ENCODE measurements at regions of chr6 and their contacts with region 1.

Region 1: GRCh38 chr6:34526992-34527728 is 29.0 kb downstream of the SPDEF start:
- DNase-seq: peak; percentile 97
- ATAC-seq: peak; percentile 94 to 99 (median 96)
- H3K4me3 ChIP-seq: peak overlapping the region in 2 of 3 donors; percentile 21 to 22
- H3K27ac ChIP-seq: no peak overlapping the region
- H3K4me1 ChIP-seq: peaks cover 0 to 9% (median 0%) of the 10 kb centered on the region in 4 donors
- H3K27me3 ChIP-seq: no peaks in the 10 kb centered on the region
- CTCF ChIP-seq: peak; percentile 75 to 89 (median 83)
- POLR2A ChIP-seq: no peak

Region 2: GRCh38 chr6:34196126-34196830 is 330.9 kb before region 1 on chr6:
- intact Hi-C with region 1: no loop called
- DNase-seq: peak; percentile 87 to 90 (median 90)
- ATAC-seq: peak; percentile 99 to 100 (median 100)
- H3K4me3 ChIP-seq: peak overlapping the region; percentile 34 to 57 (median 44)
- H3K27ac ChIP-seq: no peak overlapping the region
- H3K4me1 ChIP-seq: no peaks in the 10 kb centered on the region
- H3K27me3 ChIP-seq: no peaks in the 10 kb centered on the region
- CTCF ChIP-seq: peak; percentile 97 to 100 (median 99)
- POLR2A ChIP-seq: no peak

Region 3: DNA sequence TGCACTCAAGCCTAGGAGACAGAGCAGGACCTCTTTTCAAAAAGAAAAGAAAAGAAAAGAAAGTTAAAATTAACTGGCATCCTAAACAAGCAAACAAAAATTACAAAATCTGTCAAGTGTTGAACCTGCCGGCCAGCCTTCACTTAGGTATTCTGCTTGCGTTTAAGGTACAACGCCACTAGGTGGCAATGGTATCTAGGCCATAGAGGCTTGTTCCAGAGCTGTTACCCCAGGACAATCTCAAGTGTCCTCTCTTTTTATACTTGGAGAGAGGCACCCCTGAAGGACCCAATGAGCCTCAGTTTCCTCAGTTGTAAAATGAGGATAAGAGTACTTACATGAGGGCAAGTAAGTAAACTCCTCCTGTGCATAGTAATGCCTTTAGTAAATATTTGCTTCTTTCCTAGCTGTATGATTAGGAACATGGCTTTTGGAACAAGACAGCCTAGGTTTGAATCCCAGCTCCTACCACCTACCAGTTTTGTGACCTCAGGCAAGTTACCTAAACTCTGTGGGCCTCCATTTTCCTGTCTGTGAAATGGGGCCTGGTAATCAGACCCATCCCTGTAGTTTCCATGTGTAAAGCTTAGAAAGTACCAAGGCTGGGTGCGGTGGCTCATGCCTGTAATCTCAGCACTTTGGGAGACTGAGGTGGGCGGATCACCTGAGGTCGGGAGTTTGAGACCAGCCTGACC is 67.1 kb before region 1 on chr6:
- intact Hi-C with region 1: loop called in 1 of 2 experiments (anchors 10 kb)
- DNase-seq: peak in 1 of 3 donors; percentile 62
- ATAC-seq: peak; percentile 81 to 92 (median 86)
- H3K4me3 ChIP-seq: no peak overlapping the region
- H3K27ac ChIP-seq: no peak overlapping the region
- H3K4me1 ChIP-seq: no peaks in the 10 kb centered on the region
- H3K27me3 ChIP-seq: no peaks in the 10 kb centered on the region
- CTCF ChIP-seq: peak; percentile 65 to 83 (median 78)
- POLR2A ChIP-seq: no peak

Region 4: DNA sequence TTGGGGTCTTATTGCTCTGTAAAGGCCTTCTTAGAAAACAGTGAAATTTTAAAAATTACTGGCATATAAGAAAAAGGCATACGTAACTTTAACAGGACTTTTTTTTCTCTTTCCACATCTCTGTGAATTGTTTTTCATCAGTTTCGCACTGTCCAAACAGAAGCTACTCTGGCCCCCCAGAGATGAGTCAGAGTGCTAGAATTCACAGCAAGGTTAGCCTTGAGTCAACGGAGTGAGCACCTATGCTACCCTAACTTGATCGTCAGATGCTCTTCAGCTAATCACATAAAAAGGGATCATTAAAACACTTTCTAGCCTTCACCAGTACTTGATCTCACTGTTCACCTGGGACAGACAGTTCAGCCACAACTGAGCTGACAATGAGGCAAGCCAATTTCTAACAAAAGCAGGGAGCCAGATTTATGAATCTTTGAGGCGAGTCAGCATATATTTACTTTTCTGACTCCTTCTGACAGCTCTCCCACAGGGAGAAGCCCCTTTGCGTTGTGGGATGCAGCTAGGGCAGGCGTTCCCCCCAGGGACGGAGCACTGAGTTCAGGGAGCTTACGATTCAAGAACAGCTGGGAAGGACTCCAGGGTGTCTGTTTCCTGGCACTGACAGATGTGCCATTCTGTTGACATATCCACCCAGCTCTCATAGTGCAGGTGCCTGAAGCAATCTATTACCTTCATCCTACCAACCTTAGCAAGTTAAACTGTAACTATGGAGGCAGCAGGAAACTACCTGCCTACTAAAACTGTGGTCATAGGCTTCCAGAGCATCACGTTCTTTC is 75.4 kb after region 1 on chr6:
- intact Hi-C with region 1: loop called (anchors 5 kb)
- DNase-seq: peak; percentile 50 to 87 (median 69)
- ATAC-seq: peak; percentile 90 to 96 (median 95)
- H3K4me3 ChIP-seq: no peak overlapping the region
- H3K27ac ChIP-seq: peak overlapping the region; percentile 16 to 51 (median 29)
- H3K4me1 ChIP-seq: peaks cover 0 to 44% (median 22%) of the 10 kb centered on the region in 4 donors
- H3K27me3 ChIP-seq: no peaks in the 10 kb centered on the region
- CTCF ChIP-seq: no peak
- POLR2A ChIP-seq: no peak

Region 5: DNA sequence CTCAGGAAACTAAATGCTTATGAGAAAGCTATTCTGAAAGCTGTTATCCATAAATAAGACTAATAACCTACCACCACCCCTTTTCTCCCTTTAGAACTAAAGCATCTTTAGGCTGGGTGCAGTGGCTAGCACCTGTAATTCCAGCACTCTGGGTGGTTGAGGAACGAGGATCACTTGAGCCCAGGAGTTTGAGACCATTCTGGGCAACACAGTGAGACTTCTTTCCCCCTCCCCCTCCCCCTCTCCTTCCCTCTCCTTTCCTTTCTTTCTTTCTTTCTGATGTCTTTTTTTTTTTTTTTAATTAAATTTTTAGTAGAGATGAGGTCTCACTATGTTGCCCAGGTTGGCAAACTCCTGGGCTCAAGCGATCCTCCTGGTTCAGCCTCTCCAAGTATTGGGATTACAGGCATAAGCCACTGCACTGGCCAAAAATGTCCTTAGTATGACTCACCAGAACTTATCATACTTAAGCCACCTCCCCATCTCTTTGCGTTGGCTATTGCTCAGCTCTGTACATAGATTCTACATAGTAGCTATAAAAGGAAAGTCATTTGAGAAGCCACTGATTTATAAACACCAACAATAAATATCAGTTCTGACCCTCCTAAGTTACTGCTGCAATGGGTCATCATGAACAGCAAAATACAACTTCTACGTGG is 83.8 kb after region 1 on chr6:
- intact Hi-C with region 1: loop called in 1 of 2 experiments (anchors 5 kb)
- DNase-seq: no peak
- ATAC-seq: peak in 1 of 4 donors; percentile 40
- H3K4me3 ChIP-seq: no peak overlapping the region
- H3K27ac ChIP-seq: peak overlapping the region in 1 of 3 donors; percentile 24
- H3K4me1 ChIP-seq: peaks cover 0 to 40% (median 13%) of the 10 kb centered on the region in 4 donors
- H3K27me3 ChIP-seq: no peaks in the 10 kb centered on the region
- CTCF ChIP-seq: no peak
- POLR2A ChIP-seq: no peak

Measured in right lobe of liver (tissue), 6 donors.